Activated CD4-positive, alpha-beta T cell treated with anti-CD3 and anti-CD28 coated beads, Interleukin-2, amount 10 ng/mL, durations not matched to agents 24 days and 14 days (primary cell): ENCODE measurements at regions of chr19 and their contacts with region 1.

Region 1: GRCh38 chr19:45681391-45682015 is 10.2 kb downstream of the SNRPD2 start:
- DNase-seq: peak; percentile 97
- H3K4me3 Mint-ChIP-seq: peak overlapping the region; percentile 72
- H3K27ac Mint-ChIP-seq: peak overlapping the region; percentile 39
- H3K4me1 Mint-ChIP-seq: peaks cover 16% of the 10 kb centered on the region
- H3K27me3 Mint-ChIP-seq: peaks cover 2% of the 10 kb centered on the region

Region 2: DNA sequence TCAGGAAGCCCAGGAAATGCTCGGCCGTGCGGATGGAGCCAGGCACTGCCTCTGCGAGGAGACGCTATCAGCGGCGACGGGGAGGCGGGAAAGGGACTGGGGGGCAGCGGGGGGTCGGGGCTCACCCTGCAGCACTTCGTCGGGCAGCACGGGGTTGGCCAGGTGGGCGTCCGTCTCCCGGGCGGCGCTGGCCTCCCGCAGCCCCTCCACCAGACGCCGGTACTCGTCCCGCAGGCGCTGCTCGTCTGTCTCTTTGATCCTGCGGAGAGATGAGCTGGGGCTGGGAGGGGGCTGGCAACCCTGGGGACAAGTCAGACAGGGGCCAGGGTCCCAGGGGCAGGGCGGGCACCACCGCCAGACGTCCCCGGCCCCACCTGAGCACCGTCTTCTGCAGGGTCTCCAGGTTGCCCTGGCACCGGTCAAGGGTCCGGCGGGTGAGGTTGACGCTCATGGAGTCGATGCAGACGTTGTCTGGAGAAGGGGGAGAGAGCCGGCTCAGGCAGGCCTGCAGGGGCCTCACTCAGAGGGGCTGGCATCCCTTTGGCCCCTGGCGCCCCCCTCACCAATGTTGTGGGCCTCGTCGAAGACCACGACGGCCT is 317.5 kb before region 1 on chr19:
- intact Hi-C with region 1: no loop called
- DNase-seq: no peak
- H3K4me3 Mint-ChIP-seq: no peak overlapping the region
- H3K27ac Mint-ChIP-seq: no peak overlapping the region
- H3K4me1 Mint-ChIP-seq: peaks cover 6% of the 10 kb centered on the region
- H3K27me3 Mint-ChIP-seq: no peaks in the 10 kb centered on the region

Region 3: DNA sequence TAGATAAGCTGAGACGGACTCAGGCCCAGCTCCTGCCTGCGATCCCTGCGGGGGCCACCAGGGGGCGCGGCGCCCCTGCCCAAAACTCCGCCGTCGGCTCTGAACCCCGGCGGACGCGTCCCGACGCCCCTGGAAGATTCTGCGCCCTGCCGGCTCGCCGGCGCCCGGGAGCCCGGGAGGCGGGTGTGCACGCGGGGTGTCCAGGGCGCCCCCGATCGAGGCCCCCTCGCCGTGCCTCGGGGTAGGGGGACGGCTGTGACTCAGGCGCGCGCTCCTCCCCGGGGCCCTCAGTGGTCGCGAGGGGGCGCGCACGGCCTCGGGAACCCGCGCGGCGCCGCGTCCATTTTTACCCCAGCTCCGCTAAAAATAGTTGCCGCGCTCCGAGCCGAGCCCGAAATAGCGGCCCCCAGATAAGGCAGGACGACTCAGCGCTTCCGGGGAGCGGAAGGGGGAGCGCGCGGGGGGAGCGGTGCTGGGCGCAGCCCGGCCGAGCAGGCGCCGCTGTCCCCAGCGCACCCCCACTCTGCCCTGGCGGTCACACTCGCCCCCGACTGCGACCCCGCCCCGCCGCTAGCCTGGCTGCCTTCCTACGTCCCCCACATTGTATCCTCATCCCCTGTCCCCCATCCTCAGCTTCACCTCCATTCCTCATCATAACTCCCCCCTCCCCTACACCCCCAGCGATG is 241.8 kb before region 1 on chr19:
- intact Hi-C with region 1: no loop called
- DNase-seq: peak; percentile 95
- H3K4me3 Mint-ChIP-seq: peak overlapping the region; percentile 80
- H3K27ac Mint-ChIP-seq: peak overlapping the region; percentile 83
- H3K4me1 Mint-ChIP-seq: peaks cover 29% of the 10 kb centered on the region
- H3K27me3 Mint-ChIP-seq: peaks cover 5% of the 10 kb centered on the region

Region 4: GRCh38 chr19:45598267-45599001 is 83.1 kb before region 1 on chr19:
- intact Hi-C with region 1: loop called (anchors 5 kb)
- DNase-seq: no peak
- H3K4me3 Mint-ChIP-seq: peak overlapping the region; percentile 53
- H3K27ac Mint-ChIP-seq: no peak overlapping the region
- H3K4me1 Mint-ChIP-seq: peaks cover 28% of the 10 kb centered on the region
- H3K27me3 Mint-ChIP-seq: peaks cover 76% of the 10 kb centered on the region

Region 5: GRCh38 chr19:45779231-45780145 is 98.0 kb after region 1 on chr19:
- intact Hi-C with region 1: no loop called
- DNase-seq: peak; percentile 96
- H3K4me3 Mint-ChIP-seq: peak overlapping the region; percentile 72
- H3K27ac Mint-ChIP-seq: peak overlapping the region; percentile 34
- H3K4me1 Mint-ChIP-seq: peaks cover 15% of the 10 kb centered on the region
- H3K27me3 Mint-ChIP-seq: peaks cover 26% of the 10 kb centered on the region